Activated CD8-positive, alpha-beta T cell treated with anti-CD3 and anti-CD28 coated beads for 36 hours (primary cell): ENCODE measurements at regions of chr20 and their contacts with region 1.

Region 1: GRCh38 chr20:2663887-2664719 is at the start of gene IDH3B:
- DNase-seq: peak; percentile 96
- ATAC-seq: peak; percentile 97
- H3K4me3 Mint-ChIP-seq: peak within 1 kb of the TSS; percentile 86
- H3K27ac Mint-ChIP-seq: peak within 1 kb of the TSS; percentile 98
- H3K4me1 Mint-ChIP-seq: peaks cover 15% of the 10 kb centered on the region
- H3K27me3 Mint-ChIP-seq: no peaks in the 10 kb centered on the region
- CTCF ChIP-seq: no peak
- total RNA-seq, gene IDH3B: 109 to 114 TPM

Region 2: DNA sequence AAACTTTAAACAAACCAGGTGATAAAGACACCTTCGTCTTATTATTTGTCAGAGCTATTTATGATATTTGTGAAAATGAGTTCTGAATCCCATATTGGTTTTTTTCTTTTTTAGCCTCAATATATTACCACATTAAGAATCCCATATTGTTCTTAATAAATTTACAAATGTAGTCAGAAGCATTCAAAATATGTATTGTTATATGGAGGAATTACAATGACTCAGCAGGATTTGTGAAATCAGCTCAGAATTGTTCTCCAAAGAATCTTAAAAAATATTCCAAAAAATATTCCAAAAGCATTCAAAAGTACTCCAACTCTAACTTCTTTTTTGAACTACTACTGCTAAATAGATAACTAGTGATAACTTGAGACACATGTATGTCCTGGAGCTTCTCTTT is 148.9 kb before region 1 on chr20:
- CTCF ChIA-PET with region 1: no interaction called
- POLR2A ChIA-PET with region 1: no interaction called
- intact Hi-C with region 1: no loop called
- DNase-seq: no peak
- ATAC-seq: no peak
- H3K4me3 Mint-ChIP-seq: no peak overlapping the region
- H3K27ac Mint-ChIP-seq: no peak overlapping the region
- H3K4me1 Mint-ChIP-seq: no peaks in the 10 kb centered on the region
- H3K27me3 Mint-ChIP-seq: peaks cover 10% of the 10 kb centered on the region
- CTCF ChIP-seq: no peak

Region 3: DNA sequence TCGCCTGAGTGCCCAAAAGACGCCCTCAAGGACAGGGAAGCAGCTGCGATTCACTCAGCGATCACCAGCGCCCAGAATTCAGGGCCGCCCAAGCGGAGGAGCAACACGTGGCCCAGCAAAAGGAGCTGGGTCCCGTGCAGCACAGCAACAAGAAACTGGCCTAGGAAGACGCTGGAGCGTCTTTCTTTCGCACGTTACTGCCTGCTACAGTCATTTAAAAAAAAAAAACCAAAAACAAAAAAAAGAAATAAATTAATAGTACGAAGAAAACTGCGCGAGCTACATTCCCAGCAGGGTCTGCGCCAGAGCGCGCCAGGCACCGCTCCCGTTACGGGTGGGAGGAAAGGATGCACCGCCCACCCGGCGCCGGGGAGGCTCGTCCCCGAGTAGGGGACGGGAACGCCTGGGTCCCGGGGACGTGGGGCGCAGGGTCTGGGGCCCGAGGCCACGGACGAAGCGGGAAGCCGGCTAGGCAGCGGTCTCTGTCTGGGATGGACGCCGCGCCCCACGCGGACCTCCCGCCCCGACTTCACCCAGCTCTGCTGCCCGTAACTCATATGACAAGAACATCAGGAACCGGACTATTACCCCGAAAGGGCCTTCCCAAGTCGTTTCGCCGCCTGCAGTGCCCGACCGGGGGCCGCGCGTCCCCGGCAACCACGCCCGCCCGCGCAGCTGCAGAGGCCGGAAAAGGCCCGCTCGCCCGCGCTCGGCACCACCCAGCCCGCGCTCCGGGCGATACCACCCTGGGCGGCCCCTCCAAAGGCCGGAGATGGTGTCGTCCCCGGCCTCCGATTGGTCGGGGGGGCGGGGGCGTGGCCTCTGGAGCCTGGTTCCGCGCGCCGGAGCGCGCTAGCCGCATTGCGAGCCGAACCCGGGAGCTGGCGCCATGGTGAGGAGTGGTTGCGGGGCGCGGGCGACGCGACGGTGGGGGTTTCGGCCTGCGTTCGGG is 12.1 kb before region 1 on chr20 and contains the start of gene NOP56:
- CTCF ChIA-PET with region 1: interaction called, 3 read pairs
- POLR2A ChIA-PET with region 1: interaction called, 156 read pairs
- intact Hi-C with region 1: no loop called
- DNase-seq: peak; percentile 93
- ATAC-seq: peak; percentile 91
- H3K4me3 Mint-ChIP-seq: peak within 1 kb of the TSS; percentile 89
- H3K27ac Mint-ChIP-seq: peak within 1 kb of the TSS; percentile 90
- H3K4me1 Mint-ChIP-seq: peaks cover 40% of the 10 kb centered on the region
- H3K27me3 Mint-ChIP-seq: no peaks in the 10 kb centered on the region
- CTCF ChIP-seq: no peak
- total RNA-seq, gene NOP56: 587 to 596 TPM

Region 4: GRCh38 chr20:2865630-2866029 is 201.5 kb after region 1 on chr20:
- CTCF ChIA-PET with region 1: no interaction called
- POLR2A ChIA-PET with region 1: no interaction called
- intact Hi-C with region 1: no loop called
- DNase-seq: peak; percentile 87
- ATAC-seq: peak; percentile 90
- H3K4me3 Mint-ChIP-seq: peak overlapping the region; percentile 2
- H3K27ac Mint-ChIP-seq: peak overlapping the region; percentile 85
- H3K4me1 Mint-ChIP-seq: peaks cover 49% of the 10 kb centered on the region
- H3K27me3 Mint-ChIP-seq: no peaks in the 10 kb centered on the region
- CTCF ChIP-seq: peak; percentile 48